ENCODE measurements at regions of chr10 and their contacts with region 1.

Region 1: GRCh38 chr10:63700209-63700613 is 179.0 kb downstream of the REEP3 start:
- DNase-seq: peak; percentile 99
- ATAC-seq: peak; percentile 96
- H3K4me3 ChIP-seq: no peak overlapping the region
- H3K27ac ChIP-seq: peak overlapping the region; percentile 7; the same call in 1 of the 2 replicates
- H3K4me1 ChIP-seq: peaks cover 6% of the 10 kb centered on the region
- H3K27me3 ChIP-seq: no peaks in the 10 kb centered on the region
- CTCF ChIP-seq: no peak
- POLR2A ChIP-seq: no peak
- RAD21 ChIP-seq: no peak

Region 2: DNA sequence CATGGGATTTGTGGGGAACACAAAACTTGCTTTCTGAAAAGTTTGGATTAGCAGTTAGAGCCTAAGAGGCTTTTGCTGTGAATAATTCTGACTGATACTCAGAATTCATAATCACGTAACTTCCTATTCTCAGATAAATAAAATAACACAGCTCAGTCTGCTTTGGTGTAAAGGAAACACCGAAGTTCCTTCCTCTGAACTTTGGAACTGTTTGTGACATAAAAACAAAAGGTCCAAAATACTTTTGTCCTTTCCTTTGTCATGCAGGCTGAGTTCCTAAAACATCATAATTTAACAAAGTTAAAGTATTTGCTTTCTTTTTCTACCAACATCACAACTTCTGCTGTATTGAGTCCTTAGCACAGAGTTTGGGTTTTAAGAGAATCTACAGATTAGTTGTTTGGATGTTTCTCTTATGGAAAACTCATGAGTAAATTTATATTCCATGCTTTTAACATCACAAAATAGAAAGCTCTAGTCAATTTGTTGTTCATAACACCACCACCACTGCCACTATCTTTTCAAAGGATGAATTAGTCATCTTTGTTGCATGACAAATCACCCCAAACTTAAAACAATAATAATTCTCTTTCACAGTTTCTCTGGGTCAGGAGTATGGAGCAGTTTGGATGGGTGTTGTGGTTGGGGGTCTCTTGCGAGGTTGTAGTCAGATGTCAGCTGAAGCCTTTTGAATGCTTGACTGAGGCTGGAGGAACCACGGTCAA is 55.6 kb before region 1 on chr10:
- CTCF ChIA-PET with region 1: interaction called, 10 read pairs
- POLR2A ChIA-PET with region 1: no interaction called
- dilution Hi-C with region 1: no loop called
- in situ Hi-C with region 1: no loop called
- intact Hi-C with region 1: no loop called
- DNase-seq: no peak
- ATAC-seq: no peak
- H3K4me3 ChIP-seq: no peak overlapping the region
- H3K27ac ChIP-seq: no peak overlapping the region
- H3K4me1 ChIP-seq: peaks cover 2% of the 10 kb centered on the region; the same call in 1 of the 2 replicates
- H3K27me3 ChIP-seq: no peaks in the 10 kb centered on the region
- CTCF ChIP-seq: no peak
- POLR2A ChIP-seq: no peak
- RAD21 ChIP-seq: no peak